ENCODE measurements at regions of chr16 and their contacts with region 1.

Region 1: GRCh38 chr16:12095275-12096156 is 119.0 kb downstream of the SNX29 start:
- DNase-seq: peak; percentile 27 to 44 (median 38)
- H3K4me3 ChIP-seq: no peak overlapping the region
- H3K4me3 Mint-ChIP-seq: peak overlapping the region in 1 of 2 donors; percentile 42
- H3K27ac ChIP-seq: no peak overlapping the region
- H3K27ac Mint-ChIP-seq: no peak overlapping the region
- H3K4me1 ChIP-seq: no peaks in the 10 kb centered on the region
- H3K4me1 Mint-ChIP-seq: peaks cover 8% of the 10 kb centered on the region
- H3K27me3 ChIP-seq: no peaks in the 10 kb centered on the region
- H3K27me3 Mint-ChIP-seq: peaks cover 0 to 2% (median 0%) of the 10 kb centered on the region in 3 donors
- CTCF ChIP-seq: peak; percentile 96

Region 2: DNA sequence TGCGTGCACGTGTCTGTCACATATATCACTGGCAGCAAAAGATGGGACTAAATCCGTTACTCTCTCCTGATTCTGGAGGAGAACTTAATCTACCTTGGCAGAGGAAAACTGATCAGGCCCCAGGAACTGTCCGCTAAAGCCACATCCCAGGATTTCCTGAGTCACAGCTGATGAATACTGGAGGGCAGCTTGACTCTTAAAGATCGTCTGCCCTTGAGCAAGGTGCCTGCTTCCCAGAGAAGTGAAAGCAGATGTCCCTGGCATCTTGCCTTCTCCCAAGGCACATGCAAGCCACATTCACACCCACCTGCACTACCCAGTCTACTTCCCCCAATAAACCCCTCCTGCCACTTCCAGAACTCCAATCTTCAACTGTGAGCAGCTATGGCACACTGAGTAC is 608.4 kb after region 1 on chr16:
- intact Hi-C with region 1: no loop called
- DNase-seq: no peak
- H3K4me3 ChIP-seq: no peak overlapping the region
- H3K4me3 Mint-ChIP-seq: no peak overlapping the region
- H3K27ac ChIP-seq: no peak overlapping the region
- H3K27ac Mint-ChIP-seq: peak overlapping the region in 1 of 7 donors; percentile 38
- H3K4me1 ChIP-seq: no peaks in the 10 kb centered on the region
- H3K4me1 Mint-ChIP-seq: no peaks in the 10 kb centered on the region
- H3K27me3 ChIP-seq: no peaks in the 10 kb centered on the region
- H3K27me3 Mint-ChIP-seq: no peaks in the 10 kb centered on the region
- CTCF ChIP-seq: no peak

Region 3: GRCh38 chr16:12819126-12820117 is 723.9 kb after region 1 on chr16:
- intact Hi-C with region 1: loop called in 1 of 2 experiments (anchors 10 kb)
- DNase-seq: peak; percentile 65 to 75 (median 67)
- H3K4me3 ChIP-seq: no peak overlapping the region
- H3K4me3 Mint-ChIP-seq: peak overlapping the region in 1 of 2 donors; percentile 19
- H3K27ac ChIP-seq: no peak overlapping the region
- H3K27ac Mint-ChIP-seq: peak overlapping the region in 3 of 7 donors; percentile 2 to 66 (median 66)
- H3K4me1 ChIP-seq: peaks cover 46 to 47% of the 10 kb centered on the region in 2 donors
- H3K4me1 Mint-ChIP-seq: peaks cover 41% of the 10 kb centered on the region
- H3K27me3 ChIP-seq: peaks cover 0 to 4% of the 10 kb centered on the region in 2 donors
- H3K27me3 Mint-ChIP-seq: peaks cover 9 to 21% (median 17%) of the 10 kb centered on the region in 3 donors
- CTCF ChIP-seq: peak; percentile 91

Region 4: GRCh38 chr16:13453938-13454553 is 1358.5 kb after region 1 on chr16:
- intact Hi-C with region 1: loop called (anchors 2 to 5 kb)
- DNase-seq: peak in 1 of 3 donors; percentile 4
- H3K4me3 ChIP-seq: no peak overlapping the region
- H3K4me3 Mint-ChIP-seq: no peak overlapping the region
- H3K27ac ChIP-seq: no peak overlapping the region
- H3K27ac Mint-ChIP-seq: no peak overlapping the region
- H3K4me1 ChIP-seq: no peaks in the 10 kb centered on the region
- H3K4me1 Mint-ChIP-seq: no peaks in the 10 kb centered on the region
- H3K27me3 ChIP-seq: no peaks in the 10 kb centered on the region
- H3K27me3 Mint-ChIP-seq: peaks cover 0 to 4% (median 3%) of the 10 kb centered on the region in 3 donors
- CTCF ChIP-seq: peak; percentile 77